HEK293 (cell line): ENCODE measurements at regions of chr5 and their contacts with region 1.

Region 1: DNA sequence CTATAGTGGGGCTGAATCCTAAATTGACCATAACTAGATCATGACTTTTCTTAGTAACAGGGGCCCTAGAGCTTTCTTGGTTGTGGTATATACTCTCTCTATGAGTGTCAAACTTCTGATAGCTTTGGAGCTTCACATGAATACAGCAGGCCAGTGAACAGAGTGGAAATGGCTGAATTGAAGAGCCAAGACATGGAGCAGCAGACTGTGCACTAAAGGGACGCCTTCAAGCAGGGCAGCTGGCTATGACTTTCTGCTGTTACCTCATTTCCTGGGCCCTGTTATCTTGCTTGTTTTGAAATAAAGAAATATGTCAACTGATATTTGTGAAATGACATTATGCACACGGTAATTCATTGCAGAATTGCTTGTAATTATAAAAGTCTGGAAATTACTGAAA is 16.3 kb downstream of the CDO1 start:
- H3K4me3 ChIP-seq: no peak overlapping the region
- H3K27ac ChIP-seq: no peak overlapping the region
- H3K4me1 ChIP-seq: no peaks in the 10 kb centered on the region
- CTCF ChIP-seq: no peak

Region 2: GRCh38 chr5:115732026-115732425 is 68.1 kb before region 1 on chr5:
- CTCF ChIA-PET with region 1: no interaction called
- POLR2A ChIA-PET with region 1: no interaction called
- H3K4me3 ChIP-seq: no peak overlapping the region
- H3K27ac ChIP-seq: no peak overlapping the region
- H3K4me1 ChIP-seq: no peaks in the 10 kb centered on the region
- CTCF ChIP-seq: no peak

Region 3: DNA sequence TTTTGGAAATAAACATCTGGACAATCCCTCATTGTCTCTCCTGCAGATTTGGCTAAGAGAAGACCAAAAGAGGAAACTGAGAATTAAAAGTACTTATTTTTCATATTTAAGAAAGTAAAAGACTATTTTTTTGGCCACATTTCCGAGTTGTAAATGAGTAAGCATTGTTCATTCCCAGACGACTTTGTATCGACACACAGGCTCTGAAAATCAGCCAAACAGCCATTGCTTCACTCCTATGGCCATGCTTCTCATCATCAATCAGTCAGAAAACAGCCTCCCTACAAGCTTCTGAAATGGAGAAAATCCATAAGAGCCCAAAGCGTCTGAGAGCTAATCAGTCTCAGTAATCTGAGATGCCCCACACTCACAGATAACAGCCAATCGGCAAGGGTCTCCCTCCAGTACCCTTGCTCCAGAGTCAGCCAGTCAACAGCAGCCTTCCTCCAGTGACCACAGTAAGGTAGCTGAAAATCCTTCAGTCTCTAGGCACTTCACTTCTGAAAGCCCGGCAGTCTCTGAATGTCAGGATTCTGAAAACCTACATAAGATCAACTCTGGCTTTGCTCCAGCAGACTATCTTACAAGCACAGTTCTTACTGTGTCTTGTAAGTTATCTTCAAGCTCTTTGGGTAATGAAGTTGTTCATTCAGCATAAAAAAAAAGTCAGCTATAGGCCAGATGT is 14.6 kb before region 1 on chr5:
- CTCF ChIA-PET with region 1: no interaction called
- POLR2A ChIA-PET with region 1: no interaction called
- H3K4me3 ChIP-seq: no peak overlapping the region
- H3K27ac ChIP-seq: no peak overlapping the region
- H3K4me1 ChIP-seq: no peaks in the 10 kb centered on the region; the same call in 1 of the 2 replicates
- CTCF ChIP-seq: no peak

Region 4: GRCh38 chr5:115816226-115817081 is 16.3 kb after region 1 on chr5 and contains the start of gene CDO1:
- CTCF ChIA-PET with region 1: no interaction called
- POLR2A ChIA-PET with region 1: interaction called, 12 read pairs
- H3K4me3 ChIP-seq: peak within 1 kb of the TSS; percentile 57
- H3K27ac ChIP-seq: peak within 1 kb of the TSS; percentile 91
- H3K4me1 ChIP-seq: 0 out of 2 replicates have a peak, but pooled peaks cover 2% of the 10 kb centered on the region
- CTCF ChIP-seq: 0 out of 2 replicates have a peak, but pooled peaks have one; percentile 13

Region 5: DNA sequence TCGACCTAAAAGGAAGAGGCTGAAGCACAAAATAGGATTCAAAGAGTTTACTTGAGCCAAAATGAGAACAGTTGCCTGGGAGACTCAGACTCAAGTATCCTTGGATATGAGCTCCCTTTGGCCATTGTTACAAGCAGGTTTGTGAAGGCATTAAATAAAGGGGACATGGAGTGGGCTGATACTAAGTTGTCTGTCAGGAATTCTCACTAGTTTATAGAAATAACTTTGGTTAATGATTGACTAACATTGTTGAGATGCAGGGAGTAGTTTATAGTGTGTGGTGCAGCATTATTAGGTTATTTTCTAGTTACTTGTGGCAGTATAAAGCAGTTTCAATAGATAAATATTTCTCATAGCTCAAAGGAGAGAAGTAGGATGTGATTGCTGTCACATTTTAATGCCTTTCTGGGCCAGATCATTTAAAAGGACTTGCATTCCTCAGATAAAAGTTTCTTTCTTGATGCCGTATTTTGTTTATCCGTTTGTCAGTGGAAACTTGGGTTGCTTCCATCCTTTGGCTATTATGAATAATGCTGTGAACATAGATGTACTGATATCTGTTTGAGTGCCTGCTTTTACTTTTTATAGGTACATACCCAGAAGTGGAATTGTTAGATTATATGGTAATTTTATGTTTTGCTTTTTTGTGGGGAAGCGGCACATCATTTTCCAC is 50.8 kb after region 1 on chr5:
- CTCF ChIA-PET with region 1: no interaction called
- POLR2A ChIA-PET with region 1: no interaction called
- H3K4me3 ChIP-seq: no peak overlapping the region
- H3K27ac ChIP-seq: no peak overlapping the region
- H3K4me1 ChIP-seq: peaks cover 20% of the 10 kb centered on the region
- CTCF ChIP-seq: no peak

Region 6: DNA sequence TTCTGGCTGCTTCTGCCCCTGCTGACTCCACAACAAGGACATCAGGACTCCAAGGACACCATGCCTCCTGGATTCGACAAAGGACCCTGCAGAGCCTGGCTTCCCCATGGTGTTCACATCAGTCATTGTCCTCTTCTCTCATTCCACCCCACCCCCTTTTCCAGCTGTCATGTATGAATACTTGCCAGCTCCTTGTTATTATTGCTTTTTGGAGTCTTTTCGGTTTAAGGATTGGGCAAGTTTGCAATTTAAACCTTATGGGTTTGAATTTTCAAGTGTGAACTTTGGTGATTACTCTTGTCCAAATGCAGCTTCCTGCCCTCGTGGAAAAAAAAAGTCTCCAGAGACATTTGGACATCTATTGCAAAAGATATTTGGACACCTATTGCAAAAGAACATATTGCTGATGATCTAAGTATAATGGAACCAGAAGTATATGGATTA is 148.0 kb after region 1 on chr5:
- CTCF ChIA-PET with region 1: no interaction called
- POLR2A ChIA-PET with region 1: no interaction called
- H3K4me3 ChIP-seq: no peak overlapping the region
- H3K27ac ChIP-seq: no peak overlapping the region
- H3K4me1 ChIP-seq: no peaks in the 10 kb centered on the region
- CTCF ChIP-seq: no peak